Mammary epithelial cell (primary cell): ENCODE measurements at regions of chr12 and their contacts with region 1.

Region 1: GRCh38 chr12:2387103-2387834 is 334.5 kb downstream of the CACNA1C start:
- DNase-seq: no peak
- H3K4me3 ChIP-seq: no peak overlapping the region
- H3K27ac ChIP-seq: no peak overlapping the region
- H3K4me1 ChIP-seq: peaks cover 14% of the 10 kb centered on the region
- H3K27me3 ChIP-seq: no peaks in the 10 kb centered on the region
- CTCF ChIP-seq: no peak

Region 2: DNA sequence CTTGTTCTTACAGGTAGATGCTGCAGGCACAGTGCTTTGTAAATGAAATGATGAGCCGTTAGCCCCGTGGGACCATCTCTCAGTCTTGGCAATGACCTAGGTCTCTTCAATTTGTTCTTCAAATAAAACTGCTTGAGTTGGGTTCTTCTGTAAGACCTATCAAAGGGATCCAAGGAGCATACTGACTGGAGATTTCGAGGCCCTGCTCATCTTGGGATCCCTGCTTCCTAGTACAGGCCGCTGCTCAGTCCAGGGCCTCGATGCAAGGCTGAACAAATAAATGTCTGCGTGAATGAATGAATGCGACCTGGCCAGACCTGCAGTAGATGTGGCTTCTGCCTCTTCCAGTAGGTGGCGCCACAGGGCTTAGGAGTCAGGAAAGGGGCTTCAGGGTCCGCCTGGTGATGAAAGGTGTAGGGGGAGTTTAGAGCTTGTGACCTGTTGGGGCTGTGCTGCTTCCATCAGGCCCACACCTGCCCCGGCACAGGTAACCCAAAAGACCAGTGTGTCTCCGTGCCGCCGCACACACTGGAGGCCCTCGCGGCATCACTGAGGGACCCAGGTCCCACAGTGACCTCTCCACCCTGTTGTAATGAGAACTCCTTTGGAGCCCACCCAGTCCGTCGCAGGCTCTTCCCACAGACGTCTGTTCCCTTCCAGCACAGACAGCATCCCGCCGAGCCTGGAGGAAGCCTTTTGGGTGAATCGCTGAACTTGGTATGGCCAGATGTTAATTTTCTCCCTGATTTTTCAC is 330.1 kb before region 1 on chr12:
- CTCF ChIA-PET with region 1: no interaction called
- dilution Hi-C with region 1: no loop called
- in situ Hi-C with region 1: loop called in 1 of 2 experiments (anchors 10 kb)
- intact Hi-C with region 1: loop called (anchors 10 kb)
- DNase-seq: peak; percentile 14
- H3K4me3 ChIP-seq: no peak overlapping the region
- H3K27ac ChIP-seq: no peak overlapping the region
- H3K4me1 ChIP-seq: no peaks in the 10 kb centered on the region
- H3K27me3 ChIP-seq: peaks cover 31% of the 10 kb centered on the region
- CTCF ChIP-seq: peak; percentile 81 to 86

Region 3: DNA sequence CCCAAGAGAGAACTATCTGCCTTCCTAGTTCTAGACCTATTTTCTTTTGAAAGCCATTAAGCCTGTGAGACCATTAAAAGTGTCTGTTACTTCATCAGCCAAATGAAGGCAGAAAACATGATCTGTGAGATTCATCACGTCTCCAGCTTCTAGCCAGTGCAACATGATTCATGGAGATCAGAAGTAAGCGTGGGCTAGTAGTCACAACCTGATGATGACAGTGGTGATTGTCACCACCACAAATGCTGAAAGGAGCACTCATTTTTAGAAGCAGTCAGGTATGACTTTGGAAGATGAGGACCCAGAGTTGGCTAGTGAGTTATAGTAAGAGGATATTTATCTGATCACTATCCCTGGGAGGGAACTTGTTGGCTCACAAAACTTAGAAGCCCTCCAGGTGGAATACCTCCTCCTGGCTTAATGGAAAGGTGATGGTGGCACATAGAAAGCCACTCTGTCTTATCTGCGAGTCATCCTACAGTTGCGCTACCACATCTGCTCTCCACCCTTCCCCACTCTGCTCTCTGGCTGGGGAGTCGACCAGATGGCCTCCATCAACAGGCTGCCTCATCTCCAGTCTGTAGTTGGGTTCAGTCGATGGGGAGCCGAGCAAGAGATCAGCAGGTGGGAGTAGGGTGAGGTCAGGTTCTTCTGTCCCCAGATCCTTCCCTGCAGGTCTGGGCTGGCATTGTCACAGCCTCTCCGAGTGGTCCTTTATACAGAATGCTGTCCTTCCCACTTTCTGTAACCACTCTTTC is 89.9 kb after region 1 on chr12:
- CTCF ChIA-PET with region 1: no interaction called
- dilution Hi-C with region 1: no loop called
- in situ Hi-C with region 1: no loop called
- intact Hi-C with region 1: no loop called
- DNase-seq: no peak
- H3K4me3 ChIP-seq: no peak overlapping the region
- H3K27ac ChIP-seq: no peak overlapping the region
- H3K4me1 ChIP-seq: no peaks in the 10 kb centered on the region
- H3K27me3 ChIP-seq: no peaks in the 10 kb centered on the region
- CTCF ChIP-seq: no peak